ENCODE measurements at regions of chr7 and their contacts with region 1.

Region 1: GRCh38 chr7:73865738-73866445 is 4.9 kb downstream of the TMEM270 start:
- DNase-seq: peak; percentile 41 to 78
- H3K4me3 ChIP-seq: no peak overlapping the region
- H3K27ac ChIP-seq: no peak overlapping the region
- H3K4me1 ChIP-seq: peaks cover 14 to 25% (median 18%) of the 10 kb centered on the region in 4 donors
- H3K27me3 ChIP-seq: no peaks in the 10 kb centered on the region
- CTCF ChIP-seq: peak in 5 of 7 experiments; percentile 33 to 54 (median 52)
- EP300 ChIP-seq: no peak
- POLR2A ChIP-seq: no peak

Region 2: DNA sequence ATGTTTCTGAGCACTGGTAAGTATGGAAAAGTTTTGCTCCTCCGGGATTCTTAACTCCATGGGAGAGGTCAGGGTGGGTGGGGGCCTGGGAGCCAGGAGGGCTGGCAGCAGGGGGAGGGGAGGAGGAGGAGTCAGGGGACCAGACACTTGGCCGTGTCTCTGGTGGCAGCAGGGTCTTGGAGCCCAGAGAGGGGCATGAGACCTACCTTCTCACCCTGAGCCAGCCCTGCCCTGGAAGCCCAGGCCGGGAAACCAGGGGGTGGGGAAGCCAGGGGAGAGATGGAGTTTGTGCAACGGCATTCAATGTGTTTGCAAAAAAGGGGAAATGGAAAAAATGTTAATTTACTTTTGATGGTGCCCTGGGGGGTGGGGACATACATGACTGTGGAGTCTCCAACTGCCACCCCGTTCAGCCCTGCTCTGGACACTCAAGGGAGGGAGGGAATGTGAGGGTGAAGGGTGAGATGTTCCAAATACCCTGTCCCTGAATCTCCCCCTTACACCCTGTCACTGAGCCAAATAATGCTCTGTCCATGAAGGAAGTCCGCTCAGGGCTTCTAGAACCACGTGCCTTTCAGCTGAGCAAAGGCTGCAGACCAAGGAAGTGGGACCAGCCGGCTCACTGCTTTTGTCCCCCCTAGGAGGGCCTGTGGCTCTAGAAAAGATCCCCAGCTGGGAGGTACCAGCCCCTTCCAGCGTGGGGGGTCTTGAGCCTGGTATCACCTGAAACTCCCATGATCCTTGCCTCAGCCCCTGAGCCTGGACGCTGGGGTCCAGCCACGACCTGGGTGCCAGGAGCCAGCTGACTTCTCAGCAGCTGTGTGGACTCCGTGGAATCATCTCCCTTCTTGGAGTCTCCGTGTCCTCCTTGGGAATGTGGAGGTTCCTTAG is 43.4 kb after region 1 on chr7:
- intact Hi-C with region 1: no loop called
- DNase-seq: peak in 1 of 2 donors; percentile 22
- H3K4me3 ChIP-seq: no peak overlapping the region
- H3K27ac ChIP-seq: no peak overlapping the region
- H3K4me1 ChIP-seq: peaks cover 0 to 9% (median 0%) of the 10 kb centered on the region in 4 donors
- H3K27me3 ChIP-seq: no peaks in the 10 kb centered on the region
- CTCF ChIP-seq: no peak
- EP300 ChIP-seq: no peak
- POLR2A ChIP-seq: no peak

Region 3: GRCh38 chr7:74026903-74027551 is 161.1 kb after region 1 on chr7:
- intact Hi-C with region 1: loop called (anchors 10 kb)
- DNase-seq: peak; percentile 77 to 92
- H3K4me3 ChIP-seq: peak overlapping the region; percentile 42 to 66 (median 58)
- H3K27ac ChIP-seq: peak overlapping the region; percentile 22 to 85 (median 79)
- H3K4me1 ChIP-seq: peaks cover 36 to 92% (median 80%) of the 10 kb centered on the region in 4 donors
- H3K27me3 ChIP-seq: peaks cover 0 to 81% (median 17%) of the 10 kb centered on the region in 3 donors
- CTCF ChIP-seq: peak in 6 of 7 experiments; percentile 49 to 94 (median 92)
- EP300 ChIP-seq: no peak
- POLR2A ChIP-seq: no peak